Activated CD4-positive, alpha-beta T cell treated with anti-CD3 and anti-CD28 coated beads, Interleukin-2, amount 10 ng/mL, durations not matched to agents 24 days and 14 days (primary cell): ENCODE measurements at regions of chr11 and their contacts with region 1.

Region 1: DNA sequence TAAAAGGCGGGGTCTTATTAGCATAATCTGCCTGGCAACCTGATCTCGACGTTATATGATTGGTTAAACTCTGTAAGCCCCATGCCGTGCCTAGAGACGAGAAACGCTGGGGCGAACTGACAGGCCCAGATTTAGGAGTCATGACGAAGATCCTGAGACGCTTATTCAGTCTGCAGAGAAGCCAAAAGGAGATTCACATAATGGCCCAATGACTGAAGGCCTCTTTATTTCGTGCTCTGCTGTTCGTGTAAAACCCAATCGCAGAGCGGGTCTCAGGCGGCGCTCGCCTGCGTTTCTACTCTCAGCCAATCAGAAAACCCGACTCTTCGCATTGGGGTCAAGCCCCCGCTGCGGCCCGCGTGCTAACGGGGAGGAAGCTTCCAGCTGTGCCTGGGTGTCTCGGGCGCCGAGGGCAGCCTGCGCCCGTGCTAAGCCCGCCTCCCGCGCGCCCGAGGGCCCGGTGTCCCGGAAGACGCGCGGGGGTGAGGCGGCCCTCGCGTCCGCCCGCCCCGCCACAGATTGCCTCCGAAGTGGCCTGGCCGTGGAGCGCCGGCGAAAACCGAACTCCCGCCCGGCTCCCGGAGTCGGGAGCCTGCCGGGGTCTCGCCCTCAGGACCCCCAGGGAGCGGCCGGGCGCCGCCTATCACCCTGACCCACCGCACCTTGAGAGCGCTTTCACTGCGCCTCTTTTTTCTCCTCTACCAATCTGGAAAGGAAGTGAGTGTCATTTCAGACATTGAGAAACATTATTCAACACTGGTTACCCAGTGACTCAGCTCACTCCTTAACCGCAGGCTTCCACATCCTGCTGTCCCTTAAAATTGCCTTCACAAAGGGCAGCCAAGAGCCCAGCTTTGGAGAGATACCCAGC is 446 bp upstream of the PRDM10 start:
- DNase-seq: peak; percentile 97
- H3K4me3 Mint-ChIP-seq: peak overlapping the region; percentile 98
- H3K27ac Mint-ChIP-seq: peak overlapping the region; percentile 100
- H3K4me1 Mint-ChIP-seq: peaks cover 18% of the 10 kb centered on the region
- H3K27me3 Mint-ChIP-seq: peaks cover 3% of the 10 kb centered on the region

Region 2: DNA sequence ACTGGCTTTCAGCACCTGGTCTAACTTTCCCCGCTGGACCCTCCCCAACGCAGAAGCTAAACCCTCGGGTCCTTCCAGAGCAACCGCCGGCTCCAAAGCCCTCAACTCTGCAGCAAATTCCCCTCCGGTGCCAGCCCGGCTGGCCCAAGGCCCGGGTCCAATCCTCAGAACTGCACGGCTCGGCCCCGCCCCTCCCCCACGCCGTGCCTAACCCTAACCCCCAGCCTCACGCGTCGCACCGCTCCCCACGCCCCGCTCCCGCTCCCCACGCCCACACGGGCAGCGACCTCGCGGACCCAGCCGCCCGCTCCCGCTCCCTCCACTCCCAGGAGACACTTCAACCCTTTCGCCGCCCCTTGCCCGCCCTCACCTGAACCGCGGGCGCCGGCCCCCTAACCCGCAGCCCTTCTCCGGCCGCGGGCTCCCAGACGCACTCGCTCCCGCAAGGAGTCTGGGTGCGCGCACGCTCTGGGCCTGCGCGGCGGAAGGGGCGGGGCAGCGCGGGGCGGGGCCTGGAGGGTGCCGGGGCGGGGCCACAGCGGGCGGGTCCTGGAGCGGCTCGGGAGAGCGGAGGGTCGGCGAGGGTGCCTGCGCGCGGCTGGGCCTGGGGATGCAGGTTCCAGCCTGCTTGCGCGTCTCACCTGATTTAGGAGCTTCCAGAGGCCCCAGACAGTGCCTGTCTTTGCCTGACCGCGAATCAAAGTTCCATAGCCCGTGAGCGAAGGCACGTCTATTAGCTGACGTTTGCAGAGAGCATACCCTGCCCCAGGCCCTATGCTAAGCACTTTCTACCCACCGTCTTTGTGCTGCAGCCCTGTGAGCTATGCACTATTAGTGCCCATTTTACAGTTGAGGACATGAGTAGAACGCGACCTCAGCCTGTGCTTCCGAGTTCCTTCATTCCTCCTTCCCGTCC is 107.7 kb before region 1 on chr11 and contains the start of gene NFRKB:
- intact Hi-C with region 1: loop called (anchors 1 kb)
- DNase-seq: peak; percentile 96
- H3K4me3 Mint-ChIP-seq: peak within 1 kb of the TSS; percentile 91
- H3K27ac Mint-ChIP-seq: peak within 1 kb of the TSS; percentile 89
- H3K4me1 Mint-ChIP-seq: peaks cover 27% of the 10 kb centered on the region
- H3K27me3 Mint-ChIP-seq: peaks cover 6% of the 10 kb centered on the region
- total RNA-seq, gene NFRKB: 45.5 and 52.2 TPM in 2 replicates

Region 3: DNA sequence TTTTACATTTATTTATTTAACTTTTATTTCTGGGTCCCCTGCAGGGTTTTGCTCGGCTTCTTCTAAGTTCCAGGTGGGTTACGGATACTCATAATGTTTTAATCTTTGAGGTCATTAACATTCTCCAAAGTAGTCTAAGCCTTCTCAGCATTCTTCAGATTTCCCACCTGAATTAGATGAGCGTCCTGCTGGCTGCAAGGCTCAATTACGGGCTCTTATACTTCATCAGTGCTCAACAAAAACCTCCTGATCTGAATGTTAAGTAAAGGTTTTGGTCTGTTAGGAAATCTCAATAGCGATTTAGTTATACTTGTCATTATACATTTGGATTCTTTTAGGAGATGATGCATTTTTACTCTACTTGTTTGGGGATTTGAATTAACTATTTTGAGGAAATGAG is 80.4 kb before region 1 on chr11:
- intact Hi-C with region 1: loop called (anchors 5 kb)
- DNase-seq: no peak
- H3K4me3 Mint-ChIP-seq: no peak overlapping the region
- H3K27ac Mint-ChIP-seq: no peak overlapping the region
- H3K4me1 Mint-ChIP-seq: peaks cover 19% of the 10 kb centered on the region
- H3K27me3 Mint-ChIP-seq: no peaks in the 10 kb centered on the region

Region 4: DNA sequence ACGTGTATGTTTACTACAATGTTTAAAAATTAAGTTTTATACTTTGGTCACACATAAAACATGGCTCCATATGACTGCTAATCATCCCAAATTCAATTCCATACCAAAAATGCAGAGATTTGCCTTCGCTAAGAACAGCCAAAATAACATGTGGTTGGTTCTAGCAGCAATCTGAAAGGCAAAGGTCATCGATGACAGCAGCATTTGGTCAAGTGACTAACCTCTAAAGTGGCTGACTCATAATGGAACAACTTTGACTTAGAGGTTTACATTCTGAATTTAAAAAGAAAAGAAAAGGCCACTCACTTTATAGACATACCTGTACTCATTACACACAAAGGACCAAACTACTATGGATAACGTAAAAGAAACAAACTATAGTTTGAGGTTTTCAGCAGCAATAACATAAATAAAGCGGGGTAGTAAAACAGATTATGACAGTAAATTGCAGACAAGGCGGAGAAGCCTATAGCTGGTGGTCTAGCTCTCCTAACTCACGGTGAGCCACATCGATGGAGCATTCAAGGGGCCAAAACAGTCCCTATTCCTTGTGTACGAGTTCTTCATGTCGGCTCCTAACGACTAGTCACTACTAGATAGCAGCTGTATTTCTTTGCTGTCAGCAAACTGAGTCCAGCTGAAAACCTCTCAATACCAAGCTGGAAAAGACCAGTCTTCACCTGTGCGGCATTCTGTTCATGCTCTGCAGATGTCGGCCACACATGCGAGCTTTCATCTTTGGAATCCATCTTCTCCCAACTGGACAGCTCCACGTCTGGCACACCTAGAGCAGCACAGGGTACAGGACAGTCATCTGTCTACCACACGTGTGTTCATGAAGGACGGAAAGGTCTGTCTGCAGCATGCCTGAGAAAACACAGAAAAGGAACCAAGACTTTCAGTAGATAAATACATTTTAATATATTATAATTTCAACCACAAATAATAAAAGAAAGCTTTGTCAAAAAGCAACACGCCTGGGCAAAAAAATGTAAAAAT is 42.6 kb before region 1 on chr11:
- intact Hi-C with region 1: loop called (anchors 1 kb)
- DNase-seq: no peak
- H3K4me3 Mint-ChIP-seq: peak overlapping the region; percentile 3
- H3K27ac Mint-ChIP-seq: peak overlapping the region; percentile 8
- H3K4me1 Mint-ChIP-seq: peaks cover 14% of the 10 kb centered on the region
- H3K27me3 Mint-ChIP-seq: peaks cover 1% of the 10 kb centered on the region

Region 5: DNA sequence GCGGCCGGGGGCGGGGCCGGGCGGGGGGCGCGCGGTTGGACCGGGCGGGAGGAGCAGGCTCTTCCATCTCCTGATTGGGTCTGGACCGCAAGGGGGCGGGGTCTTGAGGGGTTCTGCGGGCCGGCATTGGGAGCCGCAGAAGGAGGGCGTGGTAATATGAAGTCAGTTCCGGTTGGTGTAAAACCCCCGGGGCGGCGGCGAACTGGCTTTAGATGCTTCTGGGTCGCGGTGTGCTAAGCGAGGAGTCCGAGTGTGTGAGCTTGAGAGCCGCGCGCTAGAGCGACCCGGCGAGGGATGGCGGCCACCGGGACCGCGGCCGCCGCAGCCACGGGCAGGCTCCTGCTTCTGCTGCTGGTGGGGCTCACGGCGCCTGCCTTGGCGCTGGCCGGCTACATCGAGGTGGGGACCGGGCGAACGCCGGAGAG is 66.6 kb after region 1 on chr11 and contains the start of gene APLP2:
- intact Hi-C with region 1: loop called (anchors 1 kb)
- DNase-seq: peak; percentile 99
- H3K4me3 Mint-ChIP-seq: peak within 1 kb of the TSS; percentile 95
- H3K27ac Mint-ChIP-seq: peak within 1 kb of the TSS; percentile 87
- H3K4me1 Mint-ChIP-seq: peaks cover 20% of the 10 kb centered on the region
- H3K27me3 Mint-ChIP-seq: peaks cover 35% of the 10 kb centered on the region
- total RNA-seq, gene APLP2: 44.9 and 46.4 TPM in 2 replicates

Region 6: GRCh38 chr11:130124096-130124495 is 121.0 kb after region 1 on chr11:
- intact Hi-C with region 1: loop called (anchors 5 kb)
- DNase-seq: no peak
- H3K4me3 Mint-ChIP-seq: no peak overlapping the region
- H3K27ac Mint-ChIP-seq: no peak overlapping the region
- H3K4me1 Mint-ChIP-seq: peaks cover 15% of the 10 kb centered on the region
- H3K27me3 Mint-ChIP-seq: peaks cover 13% of the 10 kb centered on the region

Region 7: DNA sequence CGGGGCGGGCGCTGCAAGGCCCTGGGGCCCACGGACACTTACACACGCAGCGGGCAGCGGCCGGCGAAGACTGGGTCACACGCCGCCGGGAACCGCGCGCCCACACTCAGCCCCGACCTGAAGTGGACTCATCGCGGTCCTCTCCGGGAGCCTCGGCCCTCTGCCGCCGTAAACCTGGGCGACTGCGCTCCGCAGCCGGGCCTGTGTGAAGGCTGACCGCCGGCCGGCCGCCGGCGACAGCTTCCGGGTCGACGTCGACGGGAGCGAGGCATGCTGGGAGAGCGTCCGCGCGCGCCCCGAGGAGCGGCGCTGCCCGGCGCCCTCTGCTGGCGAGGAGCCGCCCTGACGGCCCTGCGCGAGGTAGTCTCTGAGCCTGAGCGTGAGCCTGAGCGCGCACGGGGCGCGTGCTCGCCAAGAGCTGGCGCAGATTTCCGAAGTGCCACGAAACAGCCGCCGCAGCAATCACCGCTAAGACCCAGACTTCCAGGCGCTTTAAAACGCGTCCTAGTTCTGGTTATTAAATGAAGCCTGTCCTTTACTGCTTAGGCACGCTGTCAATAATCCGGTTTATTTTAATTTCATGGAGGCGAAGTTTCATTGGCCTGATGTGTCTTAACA is 913.3 kb after region 1 on chr11 and contains the start of gene SNX19:
- intact Hi-C with region 1: loop called (anchors 2 kb)
- DNase-seq: peak; percentile 98
- H3K4me3 Mint-ChIP-seq: peak within 1 kb of the TSS; percentile 84
- H3K27ac Mint-ChIP-seq: peak within 1 kb of the TSS; percentile 78
- H3K4me1 Mint-ChIP-seq: peaks cover 27% of the 10 kb centered on the region
- H3K27me3 Mint-ChIP-seq: peaks cover 9% of the 10 kb centered on the region
- total RNA-seq, gene SNX19: 48.7 and 52.9 TPM in 2 replicates